ENCODE measurements at regions of chr1 and their contacts with region 1.

Region 1: GRCh38 chr1:173714759-173715537 is at the start of gene KLHL20:
- DNase-seq: peak; percentile 93
- H3K4me3 ChIP-seq: peak within 1 kb of the TSS; percentile 75 to 96 (median 92)
- H3K27ac ChIP-seq: peak within 1 kb of the TSS; percentile 50
- H3K4me1 ChIP-seq: peaks cover 23% of the 10 kb centered on the region
- H3K27me3 ChIP-seq: peaks cover 4 to 20% of the 10 kb centered on the region in 2 experiments
- CTCF ChIP-seq: no peak
- POLR2A ChIP-seq: peak; percentile 89
- total RNA-seq, gene KLHL20: 23.8 and 26.9 TPM in 2 replicates

Region 2: GRCh38 chr1:173476664-173477285 is 238.2 kb before region 1 on chr1:
- CTCF ChIA-PET with region 1: no interaction called
- POLR2A ChIA-PET with region 1: no interaction called
- dilution Hi-C with region 1: no loop called
- intact Hi-C with region 1: loop called (anchors 1 kb)
- DNase-seq: peak; percentile 81
- H3K4me3 ChIP-seq: peak overlapping the region; percentile 63 to 78 (median 70)
- H3K27ac ChIP-seq: peak overlapping the region; percentile 79
- H3K4me1 ChIP-seq: peaks cover 53% of the 10 kb centered on the region
- H3K27me3 ChIP-seq: no peaks in the 10 kb centered on the region
- CTCF ChIP-seq: peak in 1 of 2 donors; percentile 3
- POLR2A ChIP-seq: peak; percentile 78

Region 3: DNA sequence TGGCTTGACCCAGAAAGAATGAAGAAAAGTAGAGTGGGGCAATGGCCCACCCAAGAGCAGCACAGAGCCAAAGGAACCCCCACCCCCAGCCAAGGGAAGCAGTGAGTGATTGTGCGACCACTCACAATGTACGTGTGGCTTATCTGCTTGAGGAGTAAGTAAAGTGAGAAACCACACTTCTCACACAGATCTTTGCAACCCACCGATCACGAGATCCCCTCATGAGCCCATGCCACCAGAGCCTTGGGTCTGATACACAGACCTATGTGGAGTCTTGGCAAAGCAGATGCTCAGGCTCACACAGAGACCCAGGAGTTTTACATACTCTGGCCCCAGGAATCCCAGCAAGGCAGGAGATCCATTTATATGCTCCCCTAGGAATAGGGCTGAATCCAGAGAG is 98.1 kb before region 1 on chr1:
- CTCF ChIA-PET with region 1: no interaction called
- POLR2A ChIA-PET with region 1: no interaction called
- dilution Hi-C with region 1: no loop called
- intact Hi-C with region 1: no loop called
- DNase-seq: no peak
- H3K4me3 ChIP-seq: no peak overlapping the region
- H3K27ac ChIP-seq: no peak overlapping the region
- H3K4me1 ChIP-seq: no peaks in the 10 kb centered on the region
- H3K27me3 ChIP-seq: no peaks in the 10 kb centered on the region
- CTCF ChIP-seq: no peak
- POLR2A ChIP-seq: no peak

Region 4: DNA sequence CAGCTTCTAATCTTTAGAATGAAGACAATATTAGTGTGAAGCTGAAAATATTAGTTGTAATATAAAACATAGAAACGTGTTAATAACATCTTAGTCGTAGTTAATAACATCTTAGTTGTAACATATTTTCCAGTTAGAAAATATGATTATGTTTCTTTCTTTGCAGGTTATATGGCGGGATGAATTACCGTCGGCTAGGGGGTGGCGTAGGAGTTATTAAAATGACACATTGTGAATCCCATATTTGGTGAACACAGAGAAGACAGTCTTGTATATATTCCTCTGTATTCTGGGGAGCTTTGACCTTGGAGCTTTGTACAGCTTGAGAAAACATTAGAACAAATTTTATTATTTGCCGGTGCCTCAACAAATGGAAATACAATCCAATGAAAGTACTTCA is 70.0 kb after region 1 on chr1:
- CTCF ChIA-PET with region 1: no interaction called
- POLR2A ChIA-PET with region 1: no interaction called
- dilution Hi-C with region 1: no loop called
- intact Hi-C with region 1: loop called (anchors 2 kb)
- DNase-seq: no peak
- H3K4me3 ChIP-seq: no peak overlapping the region
- H3K27ac ChIP-seq: no peak overlapping the region
- H3K4me1 ChIP-seq: no peaks in the 10 kb centered on the region
- H3K27me3 ChIP-seq: no peaks in the 10 kb centered on the region
- CTCF ChIP-seq: no peak
- POLR2A ChIP-seq: no peak

Region 5: DNA sequence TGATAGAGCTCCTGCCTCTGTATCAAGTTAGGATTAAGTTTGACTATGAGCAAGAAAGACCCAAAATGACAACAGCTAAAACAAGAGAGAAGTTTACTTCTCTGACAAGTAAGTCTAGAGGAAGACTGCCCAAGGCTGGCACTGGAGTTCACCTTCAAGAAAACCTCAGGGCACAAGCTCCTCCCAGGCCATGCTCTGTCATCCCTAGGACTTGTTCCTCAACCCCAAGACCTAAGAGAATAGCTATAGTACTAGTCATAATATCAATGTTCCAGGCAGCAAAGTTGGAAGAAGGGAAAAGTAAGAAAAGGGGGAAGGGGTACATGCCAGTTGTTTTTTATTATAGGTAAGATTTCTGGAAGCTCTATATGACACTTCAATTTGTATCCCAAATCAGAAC is 83.1 kb after region 1 on chr1:
- CTCF ChIA-PET with region 1: no interaction called
- POLR2A ChIA-PET with region 1: no interaction called
- dilution Hi-C with region 1: no loop called
- intact Hi-C with region 1: no loop called
- DNase-seq: no peak
- H3K4me3 ChIP-seq: no peak overlapping the region
- H3K27ac ChIP-seq: no peak overlapping the region
- H3K4me1 ChIP-seq: peaks cover 22% of the 10 kb centered on the region
- H3K27me3 ChIP-seq: no peaks in the 10 kb centered on the region
- CTCF ChIP-seq: no peak
- POLR2A ChIP-seq: no peak

Region 6: GRCh38 chr1:174022080-174022975 is 307.4 kb after region 1 on chr1 and contains the start of gene RC3H1:
- CTCF ChIA-PET with region 1: no interaction called
- POLR2A ChIA-PET with region 1: no interaction called
- dilution Hi-C with region 1: no loop called
- intact Hi-C with region 1: loop called (anchors 10 kb)
- DNase-seq: peak; percentile 91
- H3K4me3 ChIP-seq: peak within 1 kb of the TSS; percentile 82 to 91 (median 87)
- H3K27ac ChIP-seq: peak within 1 kb of the TSS; percentile 88
- H3K4me1 ChIP-seq: peaks cover 22% of the 10 kb centered on the region
- H3K27me3 ChIP-seq: no peaks in the 10 kb centered on the region
- CTCF ChIP-seq: no peak
- POLR2A ChIP-seq: peak; percentile 74
- total RNA-seq, gene RC3H1: 30.0 and 41.4 TPM in 2 replicates